ENCODE measurements at regions of chr3 and their contacts with region 1.

Region 1: DNA sequence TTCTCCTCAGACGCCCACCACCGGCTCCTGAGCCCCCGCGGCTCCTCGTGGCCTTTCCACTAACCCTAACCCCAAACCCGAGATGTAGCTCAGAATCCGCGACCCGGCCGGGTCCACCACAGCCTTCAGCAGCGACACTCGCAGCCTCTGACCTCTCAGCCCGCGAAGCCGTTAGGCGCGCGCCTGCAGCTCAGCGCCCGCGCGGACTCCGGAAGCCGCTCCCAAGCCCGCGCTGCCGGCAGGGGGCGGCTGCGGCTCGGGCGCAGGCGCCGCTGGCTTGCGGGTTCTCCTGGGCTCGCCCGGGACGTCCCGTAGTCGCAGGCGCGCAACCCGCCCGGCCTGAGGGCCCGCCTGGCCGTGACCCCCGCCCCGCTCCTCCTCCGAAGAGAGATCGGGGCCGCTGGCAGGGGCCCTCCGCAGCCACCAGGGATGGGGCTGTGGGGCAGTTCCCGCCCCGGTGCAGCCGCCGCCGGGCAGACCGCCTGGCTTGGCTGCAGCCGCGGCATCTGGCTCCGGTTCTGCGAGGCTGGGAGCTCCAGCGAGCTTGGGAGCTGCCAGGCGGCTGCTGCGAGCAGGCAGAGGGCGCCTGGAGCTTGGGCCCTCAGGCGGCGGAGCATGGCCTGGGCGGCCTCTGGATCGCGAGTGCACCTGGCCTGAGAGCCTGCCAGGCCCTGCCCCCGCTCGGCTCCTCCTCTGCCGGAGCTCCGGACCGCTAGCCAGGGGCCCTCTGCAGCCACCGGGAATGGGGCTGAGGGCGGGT is 120.7 kb downstream of the LMLN start:
- DNase-seq: peak; percentile 78
- ATAC-seq: peak; percentile 88
- H3K4me3 Mint-ChIP-seq: peak overlapping the region; percentile 82
- H3K27ac Mint-ChIP-seq: peak overlapping the region; percentile 87
- H3K4me1 Mint-ChIP-seq: peaks cover 17% of the 10 kb centered on the region
- H3K27me3 Mint-ChIP-seq: peaks cover 39% of the 10 kb centered on the region
- CTCF ChIP-seq: peak; percentile 78

Region 2: DNA sequence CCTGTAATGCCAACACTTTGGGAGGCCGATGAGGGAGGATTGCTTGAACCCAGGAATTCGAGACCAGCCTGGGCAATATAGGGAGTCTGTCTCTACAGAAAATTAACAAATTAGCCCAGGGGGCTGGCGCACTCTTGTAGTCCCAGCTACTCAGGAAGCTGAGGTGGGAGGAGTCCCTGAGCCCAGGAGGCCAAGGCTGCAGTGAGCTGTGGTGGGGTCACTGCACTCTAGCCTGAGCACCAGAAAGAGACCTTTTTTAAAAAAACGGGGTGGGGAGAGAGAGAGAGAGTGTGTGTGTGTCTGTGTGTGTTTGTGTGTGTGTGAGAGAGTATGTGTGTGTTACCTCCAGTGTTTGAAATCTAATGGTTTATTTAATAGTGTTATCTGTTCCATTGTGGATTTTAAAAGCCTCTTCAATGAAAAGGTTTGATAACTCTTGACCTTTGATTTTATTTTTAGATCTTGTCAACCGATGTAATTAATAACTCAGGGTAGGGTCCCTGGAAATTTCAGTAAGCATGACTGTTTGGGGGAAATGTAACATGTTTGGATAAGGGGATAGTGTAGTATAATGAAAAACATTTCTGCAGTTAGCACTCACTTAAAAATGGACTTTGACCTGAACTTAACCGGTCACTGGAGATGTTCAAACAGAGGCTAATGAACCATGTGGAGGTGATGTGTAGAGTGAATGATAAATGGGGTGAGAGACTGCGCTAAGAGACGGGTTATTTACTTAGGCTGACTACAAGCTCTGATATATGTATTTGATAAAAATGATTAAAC is 260.0 kb before region 1 on chr3:
- CTCF ChIA-PET with region 1: no interaction called
- POLR2A ChIA-PET with region 1: no interaction called
- intact Hi-C with region 1: no loop called
- DNase-seq: no peak
- ATAC-seq: no peak
- H3K4me3 Mint-ChIP-seq: no peak overlapping the region
- H3K27ac Mint-ChIP-seq: peak overlapping the region; percentile 55
- H3K4me1 Mint-ChIP-seq: peaks cover 4% of the 10 kb centered on the region
- H3K27me3 Mint-ChIP-seq: no peaks in the 10 kb centered on the region
- CTCF ChIP-seq: no peak

Region 3: GRCh38 chr3:197942956-197943556 is 137.6 kb before region 1 on chr3:
- CTCF ChIA-PET with region 1: no interaction called
- POLR2A ChIA-PET with region 1: no interaction called
- intact Hi-C with region 1: no loop called
- DNase-seq: peak; percentile 46
- ATAC-seq: peak; percentile 92
- H3K4me3 Mint-ChIP-seq: no peak overlapping the region
- H3K27ac Mint-ChIP-seq: no peak overlapping the region
- H3K4me1 Mint-ChIP-seq: peaks cover 4% of the 10 kb centered on the region
- H3K27me3 Mint-ChIP-seq: no peaks in the 10 kb centered on the region
- CTCF ChIP-seq: peak; percentile 91

Region 4: GRCh38 chr3:198051836-198052235 is 28.9 kb before region 1 on chr3:
- CTCF ChIA-PET with region 1: interaction called, 37 read pairs
- POLR2A ChIA-PET with region 1: no interaction called
- intact Hi-C with region 1: no loop called
- DNase-seq: no peak
- ATAC-seq: no peak
- H3K4me3 Mint-ChIP-seq: no peak overlapping the region
- H3K27ac Mint-ChIP-seq: no peak overlapping the region
- H3K4me1 Mint-ChIP-seq: no peaks in the 10 kb centered on the region
- H3K27me3 Mint-ChIP-seq: peaks cover 6% of the 10 kb centered on the region
- CTCF ChIP-seq: no peak

Region 5: DNA sequence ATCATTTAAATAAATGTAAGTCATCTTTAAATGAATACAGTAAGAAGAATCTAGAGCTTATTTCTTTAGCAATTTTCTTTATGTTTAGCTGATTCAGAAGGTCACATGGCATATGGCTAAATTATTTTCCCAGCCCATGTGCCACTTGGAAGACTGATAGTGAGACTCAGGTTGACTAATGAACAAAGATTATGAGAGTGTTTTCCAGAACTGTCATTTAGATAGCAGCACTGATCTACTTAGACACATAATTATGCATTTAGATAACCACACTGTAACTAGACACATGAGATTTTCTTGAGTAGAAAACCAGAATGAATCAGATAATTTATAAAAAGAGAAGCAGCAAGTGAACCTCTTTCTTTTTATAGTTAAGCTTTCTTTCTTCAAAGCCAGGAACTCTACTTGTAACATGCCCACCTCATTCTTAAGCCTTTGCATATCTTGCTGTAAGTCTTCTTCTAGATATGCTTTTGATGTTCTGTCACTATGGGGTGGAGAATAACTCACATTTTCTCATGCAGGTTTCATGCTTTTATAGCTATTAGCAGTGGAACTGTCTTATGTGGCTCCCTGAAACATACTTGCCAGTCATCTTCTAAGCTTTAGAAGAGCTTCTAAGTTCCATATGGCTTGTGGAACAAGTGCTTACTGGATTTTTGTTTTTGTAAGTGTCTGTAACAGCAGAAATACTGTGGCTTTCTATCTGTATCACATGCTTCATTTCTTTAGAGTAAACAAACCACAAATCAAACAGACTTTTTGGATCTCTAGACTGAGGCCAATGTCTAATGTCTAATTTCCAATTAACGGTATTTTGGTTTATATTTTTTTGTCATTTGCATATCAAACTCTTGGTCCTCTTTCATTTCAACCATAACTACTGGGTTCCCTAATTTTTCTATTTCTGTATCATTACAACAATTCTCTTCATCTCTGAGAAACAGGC is 19.3 kb before region 1 on chr3:
- CTCF ChIA-PET with region 1: interaction called, 27 read pairs
- POLR2A ChIA-PET with region 1: interaction called, 3 read pairs
- intact Hi-C with region 1: no loop called
- DNase-seq: no peak
- ATAC-seq: no peak
- H3K4me3 Mint-ChIP-seq: no peak overlapping the region
- H3K27ac Mint-ChIP-seq: no peak overlapping the region
- H3K4me1 Mint-ChIP-seq: peaks cover 2% of the 10 kb centered on the region
- H3K27me3 Mint-ChIP-seq: peaks cover 10% of the 10 kb centered on the region
- CTCF ChIP-seq: no peak

Region 6: GRCh38 chr3:198093112-198093679 is 12.5 kb after region 1 on chr3:
- CTCF ChIA-PET with region 1: interaction called, 20 read pairs
- POLR2A ChIA-PET with region 1: interaction called, 3 read pairs
- intact Hi-C with region 1: no loop called
- DNase-seq: no peak
- ATAC-seq: no peak
- H3K4me3 Mint-ChIP-seq: no peak overlapping the region
- H3K27ac Mint-ChIP-seq: no peak overlapping the region
- H3K4me1 Mint-ChIP-seq: no peaks in the 10 kb centered on the region
- H3K27me3 Mint-ChIP-seq: peaks cover 19% of the 10 kb centered on the region
- CTCF ChIP-seq: no peak

Measured in activated CD8-positive, alpha-beta T cell treated with anti-CD3 and anti-CD28 coated beads for 36 hours (primary cell).